Activated T-helper 2 cell treated with anti-CD3 and anti-CD28 coated beads, Interferon-gamma antibody, Interleukin-2, Interleukin-4, amounts not matched to agents 10 μg/mL and 5 μg/mL and 100 μg/mL, durations not matched to agents 14 hours and 24 hours and 36 hours (primary cell): ENCODE measurements at regions of chrX and their contacts with region 1.

Region 1: GRCh38 chrX:39772057-39772832 is 325.5 kb downstream of the BCOR start:
- DNase-seq: peak; percentile 37
- H3K4me3 Mint-ChIP-seq: peak overlapping the region; percentile 69
- H3K27ac Mint-ChIP-seq: peak overlapping the region; percentile 99
- H3K4me1 Mint-ChIP-seq: peaks cover 45% of the 10 kb centered on the region
- H3K27me3 Mint-ChIP-seq: no peaks in the 10 kb centered on the region

Region 2: GRCh38 chrX:39613482-39613921 is 158.7 kb before region 1 on chrX:
- intact Hi-C with region 1: loop called (anchors 10 kb)
- DNase-seq: no peak
- H3K4me3 Mint-ChIP-seq: peak overlapping the region; percentile 85
- H3K27ac Mint-ChIP-seq: peak overlapping the region; percentile 88
- H3K4me1 Mint-ChIP-seq: peaks cover 38% of the 10 kb centered on the region
- H3K27me3 Mint-ChIP-seq: no peaks in the 10 kb centered on the region

Region 3: DNA sequence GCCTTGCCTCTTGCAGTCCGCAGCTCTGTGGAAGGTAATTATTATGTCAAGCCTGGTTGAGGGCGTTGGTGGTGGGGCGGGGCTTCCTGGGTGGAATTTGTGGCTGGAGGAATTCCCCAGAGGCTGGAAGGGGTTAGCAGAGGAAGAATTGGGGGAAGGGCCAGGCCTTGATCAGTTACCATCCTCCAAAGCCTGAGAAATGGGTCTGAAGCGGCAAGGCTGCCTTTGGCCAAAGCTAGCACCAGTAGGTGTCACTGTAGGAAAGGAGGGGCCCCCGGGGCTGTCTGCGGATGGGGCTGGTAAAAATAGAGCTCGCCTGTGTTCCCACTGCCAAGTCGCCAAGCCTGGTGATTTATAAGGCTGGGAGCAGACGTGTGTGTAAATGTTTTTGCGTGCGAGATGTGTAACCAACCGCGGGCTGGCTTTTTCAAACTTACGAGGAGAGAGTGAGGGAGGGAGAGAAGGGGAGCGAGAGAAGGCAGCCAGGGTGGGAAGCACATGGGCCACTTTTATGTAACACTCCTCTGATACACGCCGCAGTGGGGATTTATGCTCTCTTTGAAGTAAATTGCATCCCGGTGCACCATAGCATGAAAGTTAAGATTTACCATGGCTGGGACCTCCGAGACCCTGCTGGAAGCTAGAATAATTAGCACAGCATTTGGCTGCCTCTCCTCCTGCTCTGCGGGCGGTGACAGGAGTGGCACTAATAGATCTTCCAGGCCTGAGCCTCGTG is 41.4 kb before region 1 on chrX:
- intact Hi-C with region 1: loop called (anchors 5 kb)
- DNase-seq: peak; percentile 25
- H3K4me3 Mint-ChIP-seq: no peak overlapping the region
- H3K27ac Mint-ChIP-seq: peak overlapping the region; percentile 77
- H3K4me1 Mint-ChIP-seq: peaks cover 13% of the 10 kb centered on the region
- H3K27me3 Mint-ChIP-seq: no peaks in the 10 kb centered on the region

Region 4: DNA sequence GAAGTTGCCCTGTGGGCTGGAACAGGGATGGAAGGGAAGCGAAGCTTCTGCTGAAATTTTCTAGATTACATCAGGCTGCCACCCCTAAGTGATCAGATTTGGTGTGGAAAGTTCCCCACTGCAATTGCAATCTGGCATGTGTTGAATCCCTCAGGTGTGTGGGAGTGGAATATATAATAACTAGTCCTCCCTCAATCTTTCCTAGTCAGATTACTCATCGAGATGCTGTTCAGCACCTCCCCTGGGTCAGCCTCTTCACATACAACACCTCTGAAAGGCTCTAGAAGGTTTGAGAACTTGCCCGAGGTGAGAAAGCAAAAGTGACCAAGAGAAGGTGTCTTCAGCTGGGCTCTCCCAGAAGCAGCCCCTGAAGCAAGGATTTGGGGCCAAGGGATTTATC is 11.3 kb before region 1 on chrX:
- intact Hi-C with region 1: loop called (anchors 1 kb)
- DNase-seq: no peak
- H3K4me3 Mint-ChIP-seq: no peak overlapping the region
- H3K27ac Mint-ChIP-seq: peak overlapping the region; percentile 85
- H3K4me1 Mint-ChIP-seq: peaks cover 23% of the 10 kb centered on the region
- H3K27me3 Mint-ChIP-seq: no peaks in the 10 kb centered on the region

Region 5: DNA sequence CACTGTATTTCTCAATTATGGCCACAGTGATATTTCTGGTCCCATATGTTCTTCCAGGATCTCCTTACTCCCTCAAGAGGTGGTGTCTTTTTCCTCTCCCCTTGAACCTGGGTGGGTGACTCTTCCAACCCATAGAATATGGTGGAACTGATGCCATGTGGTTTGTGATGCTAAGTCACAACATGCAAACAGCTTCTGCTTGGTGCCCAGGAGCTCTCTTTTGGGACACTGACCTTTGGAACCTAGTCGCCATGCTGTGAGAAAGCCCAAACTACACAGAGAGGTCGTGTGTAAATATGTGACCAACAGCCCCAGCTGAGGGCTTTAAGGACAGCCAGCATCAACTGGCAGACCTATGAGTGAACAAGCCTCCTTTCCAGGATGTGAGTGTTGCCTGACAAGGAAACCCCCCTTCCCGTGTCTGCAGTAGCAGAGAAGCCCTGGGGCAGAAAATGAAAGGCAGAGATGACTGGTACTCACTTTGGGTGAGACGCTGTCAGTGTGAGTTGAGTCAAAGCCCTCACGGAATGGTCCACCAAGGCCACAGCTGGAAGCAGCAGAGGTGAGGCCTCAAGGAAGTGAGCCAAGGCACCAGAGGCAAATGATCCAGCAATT is 102.1 kb after region 1 on chrX:
- intact Hi-C with region 1: loop called (anchors 1 kb)
- DNase-seq: peak; percentile 64
- H3K4me3 Mint-ChIP-seq: peak overlapping the region; percentile 7
- H3K27ac Mint-ChIP-seq: peak overlapping the region; percentile 89
- H3K4me1 Mint-ChIP-seq: peaks cover 31% of the 10 kb centered on the region
- H3K27me3 Mint-ChIP-seq: no peaks in the 10 kb centered on the region

Region 6: GRCh38 chrX:40175511-40176350 is 403.5 kb after region 1 on chrX:
- intact Hi-C with region 1: loop called (anchors 2 kb)
- DNase-seq: peak; percentile 73
- H3K4me3 Mint-ChIP-seq: peak overlapping the region; percentile 86
- H3K27ac Mint-ChIP-seq: peak overlapping the region; percentile 96
- H3K4me1 Mint-ChIP-seq: peaks cover 27% of the 10 kb centered on the region
- H3K27me3 Mint-ChIP-seq: no peaks in the 10 kb centered on the region